Spleen (tissue), 13 donors: ENCODE measurements at regions of chr11 and their contacts with region 1.

Region 1: DNA sequence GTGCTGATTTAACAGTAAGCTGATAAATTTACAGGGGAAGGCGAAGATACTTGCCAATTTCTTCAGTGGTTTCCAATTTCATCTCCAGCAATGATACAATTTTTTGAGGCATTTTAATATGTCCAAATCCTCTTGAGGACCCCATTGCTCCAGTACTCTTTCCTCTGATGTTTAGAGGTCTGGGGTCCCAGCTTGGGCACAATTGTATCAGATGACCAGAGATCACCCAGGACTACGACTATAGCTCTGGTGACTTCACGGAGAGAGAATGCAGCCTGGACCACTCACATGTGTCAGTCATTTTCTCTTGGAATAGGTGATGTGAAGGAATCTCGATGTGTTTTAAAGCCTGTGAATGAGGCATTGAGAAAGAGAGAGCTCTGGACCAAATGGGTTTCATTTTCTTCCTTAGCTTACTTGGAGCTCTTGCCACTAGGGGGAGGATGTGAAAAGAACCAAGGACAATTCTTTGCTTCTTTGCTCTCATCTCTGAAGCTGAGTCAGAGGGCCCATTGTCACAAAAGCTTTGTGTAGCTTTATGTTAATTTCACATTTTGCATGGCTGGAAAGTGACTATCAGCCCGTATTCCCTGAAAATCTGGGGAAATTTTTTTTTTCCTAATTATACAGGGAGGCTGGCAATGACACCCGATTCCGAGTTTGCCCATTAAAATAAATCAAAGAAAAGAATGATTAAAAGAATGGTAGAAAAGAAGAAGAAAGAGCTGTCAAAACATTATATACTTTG is 6.7 kb upstream of the CCDC90B start:
- DNase-seq: no peak
- H3K4me3 ChIP-seq: peak overlapping the region in 1 of 8 donors; percentile 35
- H3K27ac ChIP-seq: no peak overlapping the region
- H3K4me1 ChIP-seq: peaks cover 0 to 10% (median 7%) of the 10 kb centered on the region in 6 donors
- H3K27me3 ChIP-seq: no peaks in the 10 kb centered on the region
- CTCF ChIP-seq: peak; percentile 15 to 76 (median 63)
- POLR2A ChIP-seq: no peak

Region 2: GRCh38 chr11:82811369-82811768 is 481.5 kb before region 1 on chr11:
- intact Hi-C with region 1: no loop called
- DNase-seq: no peak
- H3K4me3 ChIP-seq: no peak overlapping the region
- H3K27ac ChIP-seq: no peak overlapping the region
- H3K4me1 ChIP-seq: no peaks in the 10 kb centered on the region
- H3K27me3 ChIP-seq: peaks cover 0 to 29% (median 0%) of the 10 kb centered on the region in 7 donors
- CTCF ChIP-seq: no peak
- POLR2A ChIP-seq: no peak

Region 3: GRCh38 chr11:82996966-82997606 is 295.8 kb before region 1 on chr11:
- intact Hi-C with region 1: no loop called
- DNase-seq: no peak
- H3K4me3 ChIP-seq: peak overlapping the region in 1 of 8 donors; percentile 14
- H3K27ac ChIP-seq: peak overlapping the region in 5 of 8 donors; percentile 25 to 57 (median 37)
- H3K4me1 ChIP-seq: peaks cover 4 to 80% (median 23%) of the 10 kb centered on the region in 6 donors
- H3K27me3 ChIP-seq: no peaks in the 10 kb centered on the region
- CTCF ChIP-seq: no peak
- POLR2A ChIP-seq: no peak

Region 4: GRCh38 chr11:83508804-83509203 is 215.9 kb after region 1 on chr11:
- intact Hi-C with region 1: no loop called
- DNase-seq: no peak
- H3K4me3 ChIP-seq: no peak overlapping the region
- H3K27ac ChIP-seq: no peak overlapping the region
- H3K4me1 ChIP-seq: no peaks in the 10 kb centered on the region
- H3K27me3 ChIP-seq: no peaks in the 10 kb centered on the region
- CTCF ChIP-seq: no peak
- POLR2A ChIP-seq: no peak

Region 5: DNA sequence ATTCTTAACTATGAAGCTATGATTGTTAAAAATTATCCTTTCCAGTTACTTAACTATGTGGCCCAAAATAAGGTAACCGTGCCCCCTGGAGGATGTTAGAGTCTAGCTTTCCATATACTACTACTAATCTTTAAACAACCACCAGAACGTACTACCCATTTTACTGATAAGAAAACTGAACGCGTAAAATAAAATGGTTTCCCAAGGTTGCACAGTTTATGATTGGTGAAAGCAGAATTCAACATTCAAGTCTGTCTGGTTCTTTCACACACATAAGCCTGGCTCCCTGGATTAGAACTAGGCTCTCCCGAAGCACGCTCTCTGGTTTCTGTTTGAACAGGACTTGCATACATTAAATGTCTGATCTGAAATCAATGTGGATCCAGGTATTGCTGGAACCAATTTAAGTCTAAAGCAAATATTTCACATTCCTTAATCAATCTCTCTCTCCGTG is 431.2 kb after region 1 on chr11:
- intact Hi-C with region 1: loop called (anchors 10 kb)
- DNase-seq: no peak
- H3K4me3 ChIP-seq: peak overlapping the region in 6 of 8 donors; percentile 13 to 63 (median 26)
- H3K27ac ChIP-seq: no peak overlapping the region
- H3K4me1 ChIP-seq: peaks cover 0 to 25% (median 12%) of the 10 kb centered on the region in 6 donors
- H3K27me3 ChIP-seq: no peaks in the 10 kb centered on the region
- CTCF ChIP-seq: peak in 7 of 11 experiments; percentile 18 to 45 (median 31)
- POLR2A ChIP-seq: no peak